Activated CD8-positive, alpha-beta T cell treated with anti-CD3 and anti-CD28 coated beads, Interleukin-2, amount 10 ng/mL, durations not matched to agents 7 days and 5 days (primary cell): ENCODE measurements at regions of chr17 and their contacts with region 1.

Region 1: DNA sequence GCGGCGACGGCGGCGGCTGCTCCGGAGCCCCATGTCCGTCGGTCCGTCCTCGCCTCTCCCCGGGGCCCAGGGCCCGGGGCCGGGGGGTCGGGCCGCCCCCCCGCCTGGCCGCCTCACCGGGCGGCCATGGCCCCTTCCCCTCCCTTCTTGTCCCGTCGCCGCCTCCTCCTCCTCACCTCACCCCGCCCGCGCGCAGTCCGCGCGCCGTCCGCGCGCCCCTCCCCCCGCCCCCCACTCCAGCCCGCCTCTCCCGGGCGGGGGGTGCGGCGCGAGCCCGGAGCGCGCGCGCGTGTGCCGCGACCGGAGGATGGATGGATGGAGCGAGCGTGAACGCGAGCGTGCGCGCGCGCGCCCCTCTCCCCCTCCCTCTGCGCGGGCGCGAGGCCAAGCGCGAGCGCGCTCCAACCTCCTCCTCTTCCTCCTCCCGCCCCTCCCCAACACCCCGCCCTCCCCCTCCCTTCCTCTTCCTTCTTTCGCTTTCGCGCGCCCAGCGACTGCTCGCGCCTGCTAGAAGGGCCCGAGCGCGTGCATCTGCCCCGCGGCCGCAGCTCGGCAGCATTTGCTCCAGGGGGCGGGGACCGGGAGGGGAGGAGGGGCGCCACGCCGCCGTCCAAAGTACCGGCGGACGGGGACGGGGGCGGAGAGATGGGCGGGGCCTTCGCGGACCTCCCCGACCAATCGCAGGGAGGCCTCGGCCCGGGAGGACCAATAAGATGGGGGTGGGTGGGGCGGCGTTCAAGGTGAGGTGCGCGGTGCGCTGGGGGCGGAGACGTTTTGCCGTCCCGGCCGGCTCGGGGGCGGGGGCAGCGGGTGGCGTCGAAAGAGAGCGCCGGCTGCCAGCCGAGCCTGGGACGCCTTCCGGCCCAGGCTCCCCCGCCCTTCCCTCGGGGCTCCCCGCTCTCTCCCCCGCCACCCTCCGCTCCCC is at the start of gene ATXN7L3:
- DNase-seq: peak; percentile 100
- ATAC-seq: peak; percentile 84
- H3K4me3 Mint-ChIP-seq: peak within 1 kb of the TSS; percentile 88
- H3K27ac Mint-ChIP-seq: peak within 1 kb of the TSS; percentile 95
- H3K4me1 Mint-ChIP-seq: peaks cover 43% of the 10 kb centered on the region
- H3K27me3 Mint-ChIP-seq: no peaks in the 10 kb centered on the region
- total RNA-seq, gene ATXN7L3: 116 to 120 TPM

Region 2: DNA sequence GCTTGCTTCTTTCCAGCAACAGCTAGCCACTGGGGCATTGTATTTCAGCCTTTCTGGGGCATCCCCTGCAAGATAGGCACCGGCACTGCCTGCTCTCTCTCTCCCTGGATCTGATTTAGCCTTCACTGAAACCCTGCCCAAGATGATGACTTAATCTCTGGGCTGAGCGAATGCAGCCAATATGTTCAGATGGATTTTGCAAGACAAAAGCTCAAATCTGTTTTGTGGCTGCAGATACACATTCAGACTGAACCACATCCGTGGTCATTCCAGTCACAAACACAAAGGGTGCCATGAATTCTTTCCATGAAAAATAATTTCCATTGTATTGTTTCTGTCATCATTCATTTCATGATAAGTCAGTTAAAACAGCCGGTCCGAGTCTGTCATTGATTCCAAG is 465.4 kb before region 1 on chr17:
- CTCF ChIA-PET with region 1: no interaction called
- POLR2A ChIA-PET with region 1: no interaction called
- DNase-seq: no peak
- ATAC-seq: no peak
- H3K4me3 Mint-ChIP-seq: no peak overlapping the region
- H3K27ac Mint-ChIP-seq: no peak overlapping the region
- H3K4me1 Mint-ChIP-seq: no peaks in the 10 kb centered on the region
- H3K27me3 Mint-ChIP-seq: peaks cover 21% of the 10 kb centered on the region

Region 3: DNA sequence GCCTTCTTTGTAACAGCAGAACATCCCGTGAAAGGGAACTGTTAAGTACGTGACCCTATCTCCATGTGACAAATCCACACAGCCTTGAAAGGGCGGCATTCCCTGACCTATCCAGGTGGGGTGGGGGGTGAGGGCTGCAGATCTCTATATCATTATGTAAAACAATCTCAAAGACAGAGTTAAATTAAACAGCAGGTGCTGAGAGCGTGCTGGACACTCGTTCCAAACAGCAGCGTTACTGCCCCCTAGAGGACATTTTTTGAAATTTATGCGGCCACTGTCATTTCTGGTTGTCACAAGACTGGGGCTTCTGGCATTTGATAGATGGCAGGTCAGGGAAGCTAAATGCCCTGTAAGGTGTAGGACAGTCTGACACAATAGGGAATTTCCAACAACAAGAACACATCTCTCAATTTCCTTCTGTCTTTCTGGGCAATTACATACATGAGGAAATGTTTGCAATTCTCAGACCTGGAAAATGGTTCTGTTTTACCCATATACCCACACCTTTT is 131.5 kb after region 1 on chr17:
- CTCF ChIA-PET with region 1: interaction called, 50 read pairs
- POLR2A ChIA-PET with region 1: interaction called, 6 read pairs
- DNase-seq: peak; percentile 87
- ATAC-seq: peak; percentile 42
- H3K4me3 Mint-ChIP-seq: no peak overlapping the region
- H3K27ac Mint-ChIP-seq: peak overlapping the region; percentile 49
- H3K4me1 Mint-ChIP-seq: peaks cover 18% of the 10 kb centered on the region
- H3K27me3 Mint-ChIP-seq: no peaks in the 10 kb centered on the region

Region 4: DNA sequence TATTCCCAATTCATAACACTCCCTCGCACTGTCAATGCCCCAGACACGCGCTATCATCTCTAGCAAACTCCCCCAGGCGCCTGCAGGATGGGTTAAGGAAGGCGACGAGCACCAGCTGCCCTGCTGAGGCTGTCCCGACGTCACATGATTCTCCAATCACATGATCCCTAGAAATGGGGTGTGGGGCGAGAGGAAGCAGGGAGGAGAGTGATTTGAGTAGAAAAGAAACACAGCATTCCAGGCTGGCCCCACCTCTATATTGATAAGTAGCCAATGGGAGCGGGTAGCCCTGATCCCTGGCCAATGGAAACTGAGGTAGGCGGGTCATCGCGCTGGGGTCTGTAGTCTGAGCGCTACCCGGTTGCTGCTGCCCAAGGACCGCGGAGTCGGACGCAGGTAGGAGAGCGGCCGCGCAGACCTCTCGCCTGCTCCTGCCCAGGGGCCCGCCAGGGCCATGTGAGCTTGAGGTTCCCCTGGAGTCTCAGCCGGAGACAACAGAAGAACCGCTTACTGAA is 145.2 kb after region 1 on chr17 and contains the start of gene GRN:
- CTCF ChIA-PET with region 1: interaction called, 39 read pairs
- POLR2A ChIA-PET with region 1: interaction called, 3 read pairs
- DNase-seq: peak; percentile 91
- ATAC-seq: peak; percentile 99
- H3K4me3 Mint-ChIP-seq: peak within 1 kb of the TSS; percentile 88
- H3K27ac Mint-ChIP-seq: peak within 1 kb of the TSS; percentile 75
- H3K4me1 Mint-ChIP-seq: peaks cover 30% of the 10 kb centered on the region
- H3K27me3 Mint-ChIP-seq: peaks cover 20% of the 10 kb centered on the region
- total RNA-seq, gene GRN: 45.6 to 46.7 TPM

Region 5: GRCh38 chr17:44350733-44351226 is 151.0 kb after region 1 on chr17:
- CTCF ChIA-PET with region 1: interaction called, 39 read pairs
- POLR2A ChIA-PET with region 1: interaction called, 3 read pairs
- DNase-seq: peak; percentile 83
- ATAC-seq: peak; percentile 86
- H3K4me3 Mint-ChIP-seq: no peak overlapping the region
- H3K27ac Mint-ChIP-seq: no peak overlapping the region
- H3K4me1 Mint-ChIP-seq: peaks cover 18% of the 10 kb centered on the region
- H3K27me3 Mint-ChIP-seq: peaks cover 6% of the 10 kb centered on the region